ENCODE measurements at regions of chr2 and their contacts with region 1.

Region 1: GRCh38 chr2:45567974-45568789 is 42.9 kb downstream of the SRBD1 start:
- DNase-seq: peak; percentile 88
- ATAC-seq: peak; percentile 97
- H3K4me3 ChIP-seq: peak overlapping the region; percentile 11 to 70 (median 50)
- H3K4me3 Mint-ChIP-seq: peak overlapping the region; percentile 85
- H3K27ac ChIP-seq: peak overlapping the region; percentile 75 to 91
- H3K27ac Mint-ChIP-seq: peak overlapping the region; percentile 86
- H3K4me1 ChIP-seq: peaks cover 10 to 12% of the 10 kb centered on the region in 2 donors
- H3K4me1 Mint-ChIP-seq: peaks cover 10% of the 10 kb centered on the region
- H3K27me3 ChIP-seq: no peaks in the 10 kb centered on the region
- H3K27me3 Mint-ChIP-seq: no peaks in the 10 kb centered on the region
- CTCF ChIP-seq: no peak

Region 2: DNA sequence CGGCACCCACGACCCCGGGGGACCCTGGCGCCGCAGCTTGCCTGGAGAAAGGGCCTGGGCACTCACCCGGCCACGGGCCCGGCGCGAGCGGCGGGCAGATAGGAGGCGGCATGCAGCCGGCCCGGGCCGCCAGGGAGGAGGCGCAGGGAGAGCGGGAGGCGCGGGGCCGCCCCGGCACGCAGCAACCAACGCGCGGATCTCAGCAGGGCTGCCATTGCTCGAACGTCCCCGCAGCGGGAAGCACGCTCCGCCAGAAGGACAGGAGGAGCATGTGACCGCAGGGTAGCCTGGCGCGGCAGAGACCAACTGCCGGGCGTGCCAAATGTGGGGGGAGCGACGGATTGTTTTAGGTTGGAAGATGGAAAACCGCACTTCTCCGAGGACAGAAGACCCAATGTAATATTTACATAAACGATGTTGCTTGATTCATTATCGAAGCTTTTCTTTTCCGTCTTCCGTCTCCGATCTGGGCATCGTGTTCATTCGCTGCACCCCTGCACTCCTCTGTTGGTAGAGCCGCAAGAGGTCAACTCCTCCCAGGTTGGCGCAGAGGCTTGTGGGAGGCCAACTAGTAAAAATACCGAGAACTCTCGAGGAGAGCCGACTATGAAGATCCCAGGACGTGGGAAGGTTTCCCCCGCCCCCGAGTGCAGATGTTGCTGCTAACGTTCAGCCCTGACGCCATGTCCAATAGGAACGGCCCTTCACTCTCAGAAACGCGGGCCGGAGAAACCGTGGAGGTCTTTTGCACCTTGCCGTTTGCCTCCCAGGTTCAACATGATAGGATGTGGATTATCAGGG is 1572.2 kb before region 1 on chr2 and contains the start of gene LRPPRC:
- CTCF ChIA-PET with region 1: no interaction called
- POLR2A ChIA-PET with region 1: no interaction called
- intact Hi-C with region 1: loop called (anchors 10 kb)
- DNase-seq: peak; percentile 96
- ATAC-seq: peak; percentile 94
- H3K4me3 ChIP-seq: peak within 1 kb of the TSS; percentile 75 to 98 (median 79)
- H3K4me3 Mint-ChIP-seq: peak within 1 kb of the TSS; percentile 90
- H3K27ac ChIP-seq: peak within 1 kb of the TSS; percentile 69 to 89
- H3K27ac Mint-ChIP-seq: peak within 1 kb of the TSS; percentile 96
- H3K4me1 ChIP-seq: peaks cover 24 to 28% of the 10 kb centered on the region in 2 donors
- H3K4me1 Mint-ChIP-seq: peaks cover 47% of the 10 kb centered on the region
- H3K27me3 ChIP-seq: no peaks in the 10 kb centered on the region
- H3K27me3 Mint-ChIP-seq: peaks cover 5% of the 10 kb centered on the region
- CTCF ChIP-seq: no peak
- total RNA-seq, gene LRPPRC: 75.6 and 77.3 TPM in 2 replicates

Region 3: DNA sequence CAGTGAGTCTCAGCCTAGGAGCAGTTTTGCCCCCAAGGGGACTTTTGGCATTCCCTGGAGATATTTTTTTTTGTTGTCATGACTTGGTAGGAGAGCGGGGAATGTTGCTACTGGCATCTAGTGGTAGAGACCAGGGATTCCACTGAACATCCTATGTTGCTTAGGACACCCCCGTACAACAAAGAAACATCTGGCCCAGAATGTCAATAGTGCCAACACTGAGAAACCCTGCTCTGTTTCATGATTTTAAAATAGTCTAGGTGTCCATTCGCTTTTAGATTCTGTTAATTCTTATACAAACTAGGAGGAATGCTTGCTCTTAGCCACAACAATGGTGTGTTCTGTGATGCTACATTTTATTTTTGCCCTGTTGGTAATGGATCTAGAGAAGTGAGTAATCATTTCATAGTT is 852.5 kb before region 1 on chr2:
- CTCF ChIA-PET with region 1: no interaction called
- POLR2A ChIA-PET with region 1: no interaction called
- intact Hi-C with region 1: loop called (anchors 10 kb)
- DNase-seq: peak; percentile 15
- ATAC-seq: no peak
- H3K4me3 ChIP-seq: no peak overlapping the region
- H3K4me3 Mint-ChIP-seq: no peak overlapping the region
- H3K27ac ChIP-seq: peak overlapping the region in 1 of 2 donors; percentile 80
- H3K27ac Mint-ChIP-seq: peak overlapping the region; percentile 61
- H3K4me1 ChIP-seq: peaks cover 35 to 45% of the 10 kb centered on the region in 2 donors
- H3K4me1 Mint-ChIP-seq: peaks cover 43% of the 10 kb centered on the region
- H3K27me3 ChIP-seq: no peaks in the 10 kb centered on the region
- H3K27me3 Mint-ChIP-seq: no peaks in the 10 kb centered on the region
- CTCF ChIP-seq: no peak

Region 4: DNA sequence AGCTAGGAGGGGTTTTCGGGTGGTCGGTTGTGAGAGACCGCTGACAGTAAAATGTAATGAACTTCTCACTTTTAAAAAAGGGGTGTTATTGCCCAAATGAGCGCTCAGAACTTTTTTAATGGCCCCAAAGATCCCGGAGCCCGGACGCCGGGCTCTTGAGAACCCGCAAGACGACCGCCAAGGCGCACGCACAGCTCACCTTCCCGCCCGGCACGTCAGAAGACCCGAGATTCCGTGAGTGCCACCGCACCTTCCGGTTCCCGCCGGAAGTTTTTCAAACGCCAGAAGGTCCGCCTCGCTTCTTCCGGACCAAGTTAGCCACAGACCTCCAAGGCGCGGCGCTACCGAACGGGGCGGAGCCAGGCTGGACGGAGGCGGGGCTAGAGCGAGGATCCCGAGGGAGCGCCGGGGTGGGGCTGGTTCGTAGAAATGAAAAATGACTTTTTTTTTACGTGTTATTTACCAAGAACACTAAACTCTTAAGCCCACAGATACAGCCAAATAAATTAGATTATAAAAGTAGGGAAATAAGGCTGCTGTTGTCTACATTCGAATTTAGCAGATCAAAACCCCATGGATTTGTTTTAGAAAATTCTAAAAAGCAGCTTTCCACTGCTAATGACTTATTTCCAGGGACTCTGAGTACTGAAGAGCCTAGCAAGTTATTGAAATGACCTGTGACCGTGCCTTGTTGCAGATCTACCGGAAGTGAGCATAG is 43.0 kb after region 1 on chr2 and contains the start of gene SRBD1:
- CTCF ChIA-PET with region 1: interaction called, 3 read pairs
- POLR2A ChIA-PET with region 1: no interaction called
- intact Hi-C with region 1: loop called (anchors 1 kb)
- DNase-seq: peak; percentile 95
- ATAC-seq: peak; percentile 97
- H3K4me3 ChIP-seq: peak within 1 kb of the TSS; percentile 73 to 96 (median 88)
- H3K4me3 Mint-ChIP-seq: peak within 1 kb of the TSS; percentile 95
- H3K27ac ChIP-seq: peak within 1 kb of the TSS; percentile 90 to 93
- H3K27ac Mint-ChIP-seq: peak within 1 kb of the TSS; percentile 93
- H3K4me1 ChIP-seq: peaks cover 13 to 16% of the 10 kb centered on the region in 2 donors
- H3K4me1 Mint-ChIP-seq: peaks cover 26% of the 10 kb centered on the region
- H3K27me3 ChIP-seq: no peaks in the 10 kb centered on the region
- H3K27me3 Mint-ChIP-seq: no peaks in the 10 kb centered on the region
- CTCF ChIP-seq: no peak
- total RNA-seq, gene SRBD1: 27.1 and 27.6 TPM in 2 replicates

Region 5: GRCh38 chr2:46666044-46666679 is 1098.0 kb after region 1 on chr2:
- CTCF ChIA-PET with region 1: no interaction called
- POLR2A ChIA-PET with region 1: no interaction called
- intact Hi-C with region 1: no loop called
- DNase-seq: no peak
- ATAC-seq: no peak
- H3K4me3 ChIP-seq: no peak overlapping the region
- H3K4me3 Mint-ChIP-seq: no peak overlapping the region
- H3K27ac ChIP-seq: no peak overlapping the region
- H3K27ac Mint-ChIP-seq: no peak overlapping the region
- H3K4me1 ChIP-seq: no peaks in the 10 kb centered on the region
- H3K4me1 Mint-ChIP-seq: no peaks in the 10 kb centered on the region
- H3K27me3 ChIP-seq: peaks cover 0 to 9% (median 0%) of the 10 kb centered on the region in 4 experiments
- H3K27me3 Mint-ChIP-seq: peaks cover 11% of the 10 kb centered on the region
- CTCF ChIP-seq: no peak

Measured in B cell (primary cell).